Right ventricle myocardium superior (tissue), 1 donor: ENCODE measurements at regions of chr2 and their contacts with region 1.

Region 1: GRCh38 chr2:98731041-98731893 is at the start of gene MGAT4A:
- DNase-seq: peak; percentile 92
- ATAC-seq: peak; percentile 94
- total RNA-seq, gene MGAT4A: 20.0 TPM

Region 2: GRCh38 chr2:98518090-98518489 is 213.2 kb before region 1 on chr2:
- intact Hi-C with region 1: no loop called
- DNase-seq: no peak
- ATAC-seq: peak; percentile 53

Region 3: GRCh38 chr2:98649135-98649991 is 81.9 kb before region 1 on chr2:
- intact Hi-C with region 1: loop called (anchors 2 kb)
- DNase-seq: peak; percentile 69
- ATAC-seq: peak; percentile 98

Region 4: GRCh38 chr2:98822301-98823164 is 91.3 kb after region 1 on chr2:
- intact Hi-C with region 1: loop called (anchors 10 kb)
- DNase-seq: peak; percentile 80
- ATAC-seq: peak; percentile 87

Region 5: GRCh38 chr2:98893911-98894321 is 162.6 kb after region 1 on chr2:
- intact Hi-C with region 1: no loop called
- DNase-seq: no peak
- ATAC-seq: no peak

Region 6: GRCh38 chr2:98903767-98904485 is 172.7 kb after region 1 on chr2:
- intact Hi-C with region 1: no loop called
- DNase-seq: no peak
- ATAC-seq: no peak